Activated T-helper 2 cell treated with anti-CD3 and anti-CD28 coated beads, Interferon-gamma antibody, Interleukin-2, Interleukin-4, amounts not matched to agents 10 μg/mL and 5 μg/mL and 100 μg/mL, durations not matched to agents 14 hours and 24 hours and 36 hours (primary cell): ENCODE measurements at regions of chr18 and their contacts with region 1.

Region 1: DNA sequence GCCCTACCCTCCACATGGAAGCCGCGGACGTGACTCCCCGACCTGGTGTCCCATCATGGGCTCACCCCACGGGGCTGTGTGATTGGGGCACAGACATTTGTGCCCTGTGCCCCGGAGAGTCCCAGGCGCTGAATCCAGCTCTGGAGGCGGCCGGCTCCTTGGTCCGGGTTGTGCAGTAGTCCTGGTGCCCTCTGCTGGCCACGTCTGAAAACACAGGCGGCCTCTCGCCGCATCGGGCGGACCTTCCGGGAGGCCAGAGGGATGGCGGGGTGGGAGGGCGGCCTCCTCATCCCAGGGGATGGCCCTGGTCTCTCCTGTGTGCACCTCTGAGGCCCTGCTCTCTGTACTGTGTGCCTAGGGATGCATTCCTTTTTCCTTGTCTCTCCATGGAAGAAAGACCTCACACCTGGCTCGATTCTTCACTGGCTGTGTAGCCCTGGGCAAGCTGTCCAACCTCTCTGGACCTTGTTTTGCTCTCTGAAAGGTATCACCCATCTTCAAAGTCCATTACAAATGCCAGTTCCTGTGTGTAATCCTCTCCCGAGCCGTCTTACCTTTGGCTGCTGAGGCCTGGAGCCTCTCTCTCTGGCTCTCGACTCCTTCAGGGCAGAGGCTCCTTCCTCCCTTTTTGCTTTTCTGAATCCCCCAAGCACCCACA is 27.6 kb downstream of the CELF4 start:
- DNase-seq: peak; percentile 16
- H3K4me3 Mint-ChIP-seq: no peak overlapping the region
- H3K27ac Mint-ChIP-seq: no peak overlapping the region
- H3K4me1 Mint-ChIP-seq: no peaks in the 10 kb centered on the region
- H3K27me3 Mint-ChIP-seq: peaks cover 7% of the 10 kb centered on the region

Region 2: DNA sequence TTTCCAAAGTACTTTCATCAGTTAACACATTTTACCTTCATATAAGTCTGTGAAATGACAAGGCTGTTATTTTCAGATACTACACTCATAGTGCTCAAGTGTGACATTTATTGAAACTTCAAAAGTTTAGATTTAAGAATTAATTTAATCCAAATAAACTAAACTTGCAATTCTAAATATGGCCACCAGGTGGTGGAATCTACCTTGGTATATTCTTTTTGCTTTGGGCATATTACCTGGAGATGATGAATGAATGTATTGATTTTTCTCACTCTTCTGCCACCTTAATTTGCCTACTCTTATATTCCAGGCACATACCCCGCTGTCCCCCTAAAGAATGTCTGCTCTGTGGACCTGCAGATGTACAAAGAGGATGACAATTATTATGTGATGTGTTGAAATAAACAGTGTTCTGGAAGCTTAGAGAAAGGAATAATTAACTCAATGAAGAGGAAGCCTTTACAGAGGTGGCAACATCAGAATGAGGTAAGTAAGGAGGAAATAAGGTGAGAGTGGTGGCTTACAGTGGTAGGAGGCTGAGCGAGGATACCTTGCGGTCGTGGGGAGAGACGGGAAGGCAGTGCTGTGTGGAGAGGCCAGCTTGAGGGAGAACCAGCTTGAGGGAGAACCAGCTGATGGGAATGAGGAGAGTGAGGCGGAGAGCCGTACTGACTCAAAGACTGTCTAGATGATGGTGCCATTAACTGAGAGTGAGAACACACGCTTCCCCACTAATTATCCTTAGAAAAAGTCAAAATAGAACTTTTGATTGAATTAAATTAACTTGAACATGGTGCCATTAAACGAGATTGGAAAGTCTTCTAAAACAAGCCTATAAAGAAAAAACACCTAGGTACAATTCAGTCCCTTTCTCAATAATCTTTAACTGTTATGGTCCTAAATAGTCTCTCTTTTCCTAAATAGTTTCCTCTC is 151.9 kb before region 1 on chr18:
- intact Hi-C with region 1: loop called (anchors 5 kb)
- DNase-seq: no peak
- H3K4me3 Mint-ChIP-seq: no peak overlapping the region
- H3K27ac Mint-ChIP-seq: no peak overlapping the region
- H3K4me1 Mint-ChIP-seq: no peaks in the 10 kb centered on the region
- H3K27me3 Mint-ChIP-seq: peaks cover 2% of the 10 kb centered on the region

Region 3: GRCh38 chr18:37445368-37445767 is 92.6 kb before region 1 on chr18:
- intact Hi-C with region 1: loop called (anchors 10 kb)
- DNase-seq: no peak
- H3K4me3 Mint-ChIP-seq: no peak overlapping the region
- H3K27ac Mint-ChIP-seq: no peak overlapping the region
- H3K4me1 Mint-ChIP-seq: peaks cover 3% of the 10 kb centered on the region
- H3K27me3 Mint-ChIP-seq: no peaks in the 10 kb centered on the region